PC-9 (cell line): ENCODE measurements at regions of chr2 and their contacts with region 1.

Region 1: GRCh38 chr2:240851078-240851991 is 17.3 kb upstream of the AGXT start:
- DNase-seq: peak; percentile 64 to 91
- H3K4me3 ChIP-seq: no peak overlapping the region
- H3K27ac ChIP-seq: no peak overlapping the region
- H3K4me1 ChIP-seq: no peaks in the 10 kb centered on the region
- H3K27me3 ChIP-seq: no peaks in the 10 kb centered on the region
- CTCF ChIP-seq: peak; percentile 97

Region 2: DNA sequence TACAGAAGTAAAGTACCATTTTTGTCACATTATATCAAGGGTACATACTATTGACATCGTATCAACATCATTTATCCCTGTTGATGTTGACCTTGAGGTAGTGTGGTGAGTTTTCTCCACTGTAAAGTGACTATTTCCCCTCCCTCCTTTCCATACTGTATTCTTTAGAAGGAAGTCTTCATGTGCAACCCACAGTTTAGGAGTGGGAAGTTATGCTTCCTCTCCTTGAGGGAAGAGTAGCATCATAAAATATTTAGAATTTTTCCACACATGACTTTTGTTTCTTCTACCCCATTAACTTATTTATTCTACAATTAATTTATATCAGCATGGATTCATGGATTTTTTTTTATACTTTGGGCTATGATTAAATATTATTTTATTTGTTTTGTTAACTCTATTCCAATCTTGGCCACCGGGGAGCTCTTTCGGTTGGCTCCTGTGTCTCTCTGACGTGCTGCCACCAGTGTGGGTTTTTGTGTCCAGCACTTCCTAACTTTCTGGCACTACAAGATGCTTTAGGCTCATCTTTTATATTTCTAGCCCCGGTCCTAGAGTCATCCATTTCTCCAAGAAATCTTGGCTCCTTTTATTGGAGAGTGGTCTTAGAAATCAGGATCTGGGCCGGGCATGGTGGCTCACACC is 187.7 kb before region 1 on chr2:
- CTCF ChIA-PET with region 1: no interaction called
- POLR2A ChIA-PET with region 1: no interaction called
- intact Hi-C with region 1: no loop called
- DNase-seq: no peak
- H3K4me3 ChIP-seq: no peak overlapping the region
- H3K27ac ChIP-seq: no peak overlapping the region
- H3K4me1 ChIP-seq: no peaks in the 10 kb centered on the region
- H3K27me3 ChIP-seq: peaks cover 94% of the 10 kb centered on the region
- CTCF ChIP-seq: no peak

Region 3: DNA sequence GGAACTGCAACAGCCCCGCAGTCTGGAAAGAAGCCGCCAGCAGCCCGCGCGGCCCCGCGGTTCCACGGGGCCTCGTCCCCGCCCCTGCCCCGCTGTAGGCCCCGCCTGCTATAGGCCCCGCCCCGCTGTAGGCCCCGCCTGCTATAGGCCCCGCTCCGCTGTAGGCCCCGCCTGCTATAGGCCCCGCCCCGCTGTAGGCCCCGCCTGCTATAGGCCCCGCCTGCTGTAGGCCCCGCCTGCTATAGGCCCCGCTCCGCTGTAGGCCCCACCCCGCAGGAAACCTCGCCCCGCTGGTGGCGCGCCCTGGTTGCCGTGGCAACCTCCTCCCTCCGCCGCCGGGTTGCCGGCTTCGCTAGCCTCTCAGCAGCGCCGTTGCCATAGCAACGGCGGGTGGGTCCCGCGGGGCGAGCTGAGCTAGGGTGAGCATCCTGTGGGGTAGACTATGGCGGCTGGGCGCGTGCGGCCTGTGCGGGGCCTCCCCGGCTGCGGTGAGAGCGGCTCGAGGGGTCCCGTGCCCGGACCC is 19.1 kb before region 1 on chr2:
- CTCF ChIA-PET with region 1: no interaction called
- POLR2A ChIA-PET with region 1: no interaction called
- intact Hi-C with region 1: no loop called
- DNase-seq: peak; percentile 89 to 96
- H3K4me3 ChIP-seq: no peak overlapping the region; the same call in 1 of the 2 replicates
- H3K27ac ChIP-seq: no peak overlapping the region
- H3K4me1 ChIP-seq: 0 out of 2 replicates have a peak, but pooled peaks cover 6% of the 10 kb centered on the region
- H3K27me3 ChIP-seq: peaks cover 79% of the 10 kb centered on the region
- CTCF ChIP-seq: no peak

Region 4: GRCh38 chr2:240913810-240914644 is 62.7 kb after region 1 on chr2:
- CTCF ChIA-PET with region 1: no interaction called
- POLR2A ChIA-PET with region 1: no interaction called
- intact Hi-C with region 1: loop called (anchors 2 kb)
- DNase-seq: peak in 1 of 2 experiments; percentile 65
- H3K4me3 ChIP-seq: no peak overlapping the region
- H3K27ac ChIP-seq: no peak overlapping the region
- H3K4me1 ChIP-seq: peaks cover 17% of the 10 kb centered on the region
- H3K27me3 ChIP-seq: no peaks in the 10 kb centered on the region
- CTCF ChIP-seq: peak; percentile 99

Region 5: DNA sequence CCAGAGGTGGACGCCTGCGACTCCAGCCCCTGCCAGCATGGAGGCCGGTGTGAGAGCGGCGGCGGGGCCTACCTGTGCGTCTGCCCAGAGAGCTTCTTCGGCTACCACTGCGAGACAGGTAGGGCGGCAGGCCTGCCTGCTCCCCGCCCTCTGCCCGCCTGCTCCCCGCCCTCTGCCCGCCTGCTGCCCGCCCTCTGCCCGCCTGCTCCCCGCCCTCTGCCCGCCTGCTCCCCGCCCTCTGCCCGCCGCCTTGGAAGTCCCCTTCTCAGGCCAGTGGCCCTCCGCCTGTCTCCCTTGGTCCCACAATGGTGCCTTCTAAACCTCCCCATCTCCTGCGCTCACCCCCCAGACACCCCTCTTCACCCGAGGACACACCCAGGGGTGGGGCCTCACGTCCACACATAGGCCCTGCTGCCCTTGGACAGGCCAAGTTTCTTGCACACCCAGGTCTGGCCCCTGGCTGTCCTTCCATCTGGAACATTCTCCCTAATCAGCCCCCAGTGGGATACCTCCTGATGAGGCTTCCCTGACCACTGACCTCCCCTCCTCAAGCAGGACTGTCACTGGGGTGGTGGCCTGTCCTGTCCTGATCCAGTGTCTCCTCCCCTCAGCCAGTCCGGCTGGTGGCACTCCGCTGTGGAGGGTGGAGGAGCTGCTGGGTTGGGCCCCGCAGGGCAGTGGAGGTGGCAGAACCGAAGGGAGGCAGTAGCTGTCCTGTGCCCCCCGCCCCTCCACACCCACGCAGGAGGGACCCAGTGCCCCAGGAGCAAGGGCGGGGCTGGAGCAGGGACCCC is 212.9 kb after region 1 on chr2:
- CTCF ChIA-PET with region 1: no interaction called
- POLR2A ChIA-PET with region 1: no interaction called
- intact Hi-C with region 1: loop called (anchors 1 kb)
- DNase-seq: peak; percentile 46 to 84
- H3K4me3 ChIP-seq: peak overlapping the region; percentile 32; the same call in 1 of the 2 replicates
- H3K27ac ChIP-seq: no peak overlapping the region
- H3K4me1 ChIP-seq: peaks cover 7% of the 10 kb centered on the region
- H3K27me3 ChIP-seq: peaks cover 25% of the 10 kb centered on the region
- CTCF ChIP-seq: no peak

Region 6: GRCh38 chr2:241149925-241150659 is 298.8 kb after region 1 on chr2 and contains the start of gene PPP1R7:
- CTCF ChIA-PET with region 1: no interaction called
- POLR2A ChIA-PET with region 1: no interaction called
- intact Hi-C with region 1: loop called (anchors 2 kb)
- DNase-seq: peak; percentile 94 to 97
- H3K4me3 ChIP-seq: peak within 1 kb of the TSS; percentile 76
- H3K27ac ChIP-seq: no peak within 1 kb of the TSS
- H3K4me1 ChIP-seq: peaks cover 17% of the 10 kb centered on the region
- H3K27me3 ChIP-seq: no peaks in the 10 kb centered on the region
- CTCF ChIP-seq: no peak
- total RNA-seq, gene PPP1R7: 113 and 143 TPM in 2 replicates

Region 7: DNA sequence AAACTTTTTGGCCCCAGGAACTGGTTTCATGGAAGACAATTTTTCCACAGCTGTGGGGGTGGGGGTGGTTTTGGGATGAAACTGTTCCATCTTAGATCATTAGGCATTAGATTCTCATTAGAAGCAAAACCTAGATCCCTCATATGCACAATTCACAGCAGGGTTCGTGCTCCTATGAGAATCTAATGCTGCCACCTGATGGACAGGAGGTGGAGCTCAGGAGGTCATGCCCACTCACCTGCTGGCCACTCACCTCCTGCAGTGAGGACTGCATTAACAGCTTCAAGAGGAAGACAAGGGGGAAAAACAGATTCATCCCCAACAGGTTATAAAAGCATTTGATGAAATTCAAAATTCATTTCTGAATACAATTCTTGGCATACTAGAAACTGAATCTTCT is 747.1 kb after region 1 on chr2:
- CTCF ChIA-PET with region 1: no interaction called
- POLR2A ChIA-PET with region 1: no interaction called
- intact Hi-C with region 1: loop called (anchors 1 kb)
- DNase-seq: peak; percentile 48 to 64
- H3K4me3 ChIP-seq: no peak overlapping the region
- H3K27ac ChIP-seq: no peak overlapping the region
- H3K4me1 ChIP-seq: no peaks in the 10 kb centered on the region
- H3K27me3 ChIP-seq: no peaks in the 10 kb centered on the region
- CTCF ChIP-seq: peak; percentile 61; the same call in 1 of the 2 replicates

Region 8: DNA sequence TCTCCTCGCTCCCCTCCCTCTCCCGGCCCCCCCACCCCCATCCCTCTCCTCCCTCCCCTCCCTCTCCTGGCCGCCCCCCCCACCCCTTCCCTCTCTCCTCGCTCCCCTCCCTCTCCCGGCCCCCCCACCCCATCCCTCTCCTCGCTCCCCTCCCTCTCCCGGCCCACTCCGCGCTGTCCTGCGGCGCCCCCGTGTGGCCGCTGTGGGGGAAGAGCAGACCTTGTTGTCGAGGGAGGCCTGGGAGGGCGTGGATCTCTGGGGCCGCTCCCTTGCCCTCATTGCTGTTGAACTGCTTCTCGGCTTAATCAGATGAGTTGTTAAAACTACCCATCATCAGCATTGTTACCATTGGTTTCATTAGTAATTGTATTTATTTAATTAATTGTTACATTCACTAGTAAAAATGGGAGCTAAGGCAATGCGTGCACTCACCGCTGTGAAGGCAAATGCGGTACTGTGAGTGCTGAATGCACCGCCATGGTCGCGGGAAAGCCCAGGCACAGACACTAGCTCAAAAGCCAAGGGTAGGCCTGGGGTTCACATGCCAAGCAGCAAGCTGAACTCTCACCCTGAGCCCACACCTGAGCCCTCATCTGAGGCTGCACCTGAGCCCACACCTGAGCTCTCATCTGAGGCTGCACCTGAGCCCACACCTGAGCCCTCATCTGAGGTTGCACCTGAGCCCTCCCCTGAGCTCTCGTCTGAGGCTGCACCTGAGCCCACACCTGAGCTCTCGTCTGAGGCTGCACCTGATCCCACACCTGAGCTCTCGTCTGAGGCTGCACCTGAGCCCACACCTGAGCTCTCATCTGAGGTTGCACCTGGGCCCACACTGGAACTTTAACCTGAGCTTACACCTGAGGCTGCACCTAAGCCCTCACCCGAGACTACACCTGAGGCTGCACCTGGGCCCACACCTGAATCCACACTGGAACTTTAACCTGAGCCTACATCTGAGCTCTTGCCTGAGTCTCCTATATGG is 1026.9 kb after region 1 on chr2:
- CTCF ChIA-PET with region 1: no interaction called
- POLR2A ChIA-PET with region 1: no interaction called
- intact Hi-C with region 1: loop called (anchors 5 kb)
- DNase-seq: peak in 1 of 2 experiments; percentile 88
- H3K4me3 ChIP-seq: no peak overlapping the region
- H3K27ac ChIP-seq: no peak overlapping the region
- H3K4me1 ChIP-seq: peaks cover 5% of the 10 kb centered on the region
- H3K27me3 ChIP-seq: no peaks in the 10 kb centered on the region
- CTCF ChIP-seq: peak; percentile 79